IMR-90 (cell line): ENCODE measurements at regions of chr1 and their contacts with region 1.

Region 1: GRCh38 chr1:68600049-68600661 is 103.3 kb upstream of the DEPDC1 start:
- DNase-seq: peak; percentile 6
- ATAC-seq: no peak
- H3K4me3 ChIP-seq: no peak overlapping the region
- H3K27ac ChIP-seq: no peak overlapping the region
- H3K4me1 ChIP-seq: no peaks in the 10 kb centered on the region
- H3K27me3 ChIP-seq: no peaks in the 10 kb centered on the region
- CTCF ChIP-seq: peak; percentile 45
- POLR2A ChIP-seq: no peak
- RAD21 ChIP-seq: peak; percentile 44

Region 2: DNA sequence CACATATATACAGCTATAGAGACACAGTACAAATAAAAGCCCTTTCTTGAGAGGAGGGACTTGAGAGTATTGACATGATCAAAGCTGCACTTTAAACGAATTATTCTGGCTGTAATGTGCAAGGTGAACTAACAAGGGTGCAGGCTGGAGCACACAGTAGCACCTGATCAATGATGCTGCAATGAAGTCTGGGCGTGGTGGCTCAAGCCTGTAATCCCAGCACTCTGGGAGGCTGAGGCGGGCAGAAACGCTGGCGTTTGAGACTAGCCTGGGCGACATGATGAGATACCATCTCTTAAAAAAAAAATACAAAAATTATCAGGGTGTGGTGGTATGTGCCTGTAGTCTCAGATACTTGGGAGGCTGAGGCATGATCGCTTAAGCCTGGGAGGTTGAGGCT is 1796.9 kb after region 1 on chr1:
- CTCF ChIA-PET with region 1: no interaction called
- POLR2A ChIA-PET with region 1: no interaction called
- dilution Hi-C with region 1: no loop called
- in situ Hi-C with region 1: no loop called
- intact Hi-C with region 1: loop called (anchors 10 kb)
- DNase-seq: no peak
- ATAC-seq: no peak
- H3K4me3 ChIP-seq: no peak overlapping the region
- H3K27ac ChIP-seq: no peak overlapping the region
- H3K4me1 ChIP-seq: no peaks in the 10 kb centered on the region
- H3K27me3 ChIP-seq: no peaks in the 10 kb centered on the region
- CTCF ChIP-seq: no peak
- POLR2A ChIP-seq: no peak
- RAD21 ChIP-seq: no peak